Right lobe of liver (tissue), 6 donors: ENCODE measurements at regions of chr15 and their contacts with region 1.

Region 1: DNA sequence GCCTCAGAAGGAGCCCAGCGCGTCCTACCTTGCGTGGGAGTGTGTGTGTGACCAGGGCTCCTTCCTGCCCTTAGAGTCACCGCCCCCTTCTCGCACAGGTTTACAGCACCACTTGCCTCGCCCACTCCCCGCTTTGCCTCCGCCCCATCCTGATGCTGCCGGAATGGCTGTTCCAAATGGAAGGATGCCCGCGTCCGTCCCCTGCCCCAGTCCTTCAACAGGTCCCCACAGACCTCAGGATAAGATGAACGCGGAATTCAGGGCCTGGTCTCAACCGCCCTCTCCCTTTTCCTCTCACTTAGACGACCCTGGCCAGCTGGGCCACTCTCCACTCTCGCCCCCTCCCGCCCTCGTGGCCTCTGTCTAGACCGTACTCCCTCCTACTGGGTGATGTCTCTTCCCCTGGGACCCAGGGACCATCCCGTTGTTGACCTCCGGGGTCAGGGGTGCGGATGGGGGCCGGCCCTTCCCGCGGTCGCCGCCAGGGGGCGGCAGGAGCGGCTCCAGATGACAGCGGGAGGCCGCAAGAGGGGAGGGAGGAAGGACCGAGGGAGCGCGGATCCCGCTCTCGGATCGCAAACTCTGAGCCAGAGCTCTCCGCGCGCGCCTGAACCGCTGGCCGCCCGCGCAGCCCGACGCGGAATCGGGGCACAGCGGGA is at the start of gene THSD4:
- DNase-seq: peak; percentile 75 to 82 (median 82)
- ATAC-seq: peak; percentile 85 to 89 (median 85)
- H3K4me3 ChIP-seq: peak within 1 kb of the TSS; percentile 62 to 78 (median 74)
- H3K27ac ChIP-seq: peak within 1 kb of the TSS; percentile 22 to 79 (median 74)
- H3K4me1 ChIP-seq: peaks cover 0 to 18% (median 2%) of the 10 kb centered on the region in 4 donors
- H3K27me3 ChIP-seq: no peaks in the 10 kb centered on the region
- CTCF ChIP-seq: peak; percentile 95 to 98 (median 97)
- POLR2A ChIP-seq: peak; percentile 53
- total RNA-seq, gene THSD4: 5.2 to 21.8 (median 13.7) TPM

Region 2: GRCh38 chr15:71278989-71279756 is 164.1 kb after region 1 on chr15:
- intact Hi-C with region 1: no loop called
- DNase-seq: peak; percentile 54 to 84 (median 75)
- ATAC-seq: peak; percentile 79 to 88 (median 84)
- H3K4me3 ChIP-seq: peak overlapping the region in 1 of 3 donors; percentile 23
- H3K27ac ChIP-seq: peak overlapping the region; percentile 59 to 94 (median 87)
- H3K4me1 ChIP-seq: peaks cover 0 to 35% (median 15%) of the 10 kb centered on the region in 4 donors
- H3K27me3 ChIP-seq: no peaks in the 10 kb centered on the region
- CTCF ChIP-seq: no peak
- POLR2A ChIP-seq: no peak

Region 3: DNA sequence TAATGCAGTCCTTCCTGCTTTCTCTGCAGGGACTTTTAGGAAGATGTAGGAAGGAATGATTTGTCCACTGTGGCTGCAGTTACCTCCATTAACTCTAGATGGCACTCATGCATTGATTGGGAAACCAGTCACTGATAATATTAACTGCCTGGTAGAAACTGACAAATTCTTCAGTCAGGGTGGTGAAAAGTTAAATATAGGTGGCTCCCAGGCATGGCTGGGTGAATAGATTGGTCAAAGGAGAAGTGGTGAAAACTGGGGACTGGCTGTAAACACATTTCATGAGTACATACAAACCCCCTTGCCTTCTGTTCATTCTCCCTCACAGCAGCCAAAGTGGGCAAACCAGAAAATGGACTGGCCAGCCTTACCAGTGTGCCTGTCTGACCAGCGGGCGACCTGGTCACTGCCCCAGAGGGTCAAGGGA is 333.7 kb after region 1 on chr15:
- intact Hi-C with region 1: loop called in 1 of 2 experiments (anchors 10 kb)
- DNase-seq: no peak
- ATAC-seq: peak; percentile 80 to 85 (median 84)
- H3K4me3 ChIP-seq: no peak overlapping the region
- H3K27ac ChIP-seq: peak overlapping the region in 1 of 3 donors; percentile 17
- H3K4me1 ChIP-seq: peaks cover 0 to 30% (median 8%) of the 10 kb centered on the region in 4 donors
- H3K27me3 ChIP-seq: no peaks in the 10 kb centered on the region
- CTCF ChIP-seq: peak; percentile 90 to 93 (median 92)
- POLR2A ChIP-seq: no peak